Left cardiac atrium (tissue), 4 donors: ENCODE measurements at regions of chr18 and their contacts with region 1.

Region 1: GRCh38 chr18:40249390-40250080 is 1705.5 kb upstream of the PIK3C3 start:
- DNase-seq: no peak
- ATAC-seq: no peak

Region 2: GRCh38 chr18:40197711-40198110 is 51.8 kb before region 1 on chr18:
- intact Hi-C with region 1: loop called in 1 of 2 experiments (anchors 10 kb)
- DNase-seq: no peak
- ATAC-seq: no peak

Region 3: DNA sequence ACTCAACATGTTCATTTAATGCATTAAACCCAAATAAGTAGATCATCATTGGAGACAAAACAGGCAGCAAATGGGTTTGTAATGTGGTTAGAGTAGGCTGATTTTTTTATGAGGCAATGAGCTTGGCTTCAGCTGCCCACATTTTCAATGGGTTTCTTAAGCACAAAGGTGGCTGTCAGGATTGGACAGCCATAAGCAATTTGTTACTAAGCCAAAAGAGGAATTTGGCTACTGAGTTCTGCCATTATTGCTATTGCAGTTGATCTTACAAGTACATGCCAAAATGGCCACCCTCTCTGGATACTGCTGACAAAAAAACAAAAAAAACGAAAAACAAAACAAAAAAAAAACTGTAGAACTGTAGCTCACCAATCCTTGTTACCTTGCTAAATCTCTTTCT is 357.5 kb after region 1 on chr18:
- intact Hi-C with region 1: no loop called
- DNase-seq: no peak
- ATAC-seq: no peak